AG04449 (cell line): ENCODE measurements at regions of chr11 and their contacts with region 1.

Region 1: DNA sequence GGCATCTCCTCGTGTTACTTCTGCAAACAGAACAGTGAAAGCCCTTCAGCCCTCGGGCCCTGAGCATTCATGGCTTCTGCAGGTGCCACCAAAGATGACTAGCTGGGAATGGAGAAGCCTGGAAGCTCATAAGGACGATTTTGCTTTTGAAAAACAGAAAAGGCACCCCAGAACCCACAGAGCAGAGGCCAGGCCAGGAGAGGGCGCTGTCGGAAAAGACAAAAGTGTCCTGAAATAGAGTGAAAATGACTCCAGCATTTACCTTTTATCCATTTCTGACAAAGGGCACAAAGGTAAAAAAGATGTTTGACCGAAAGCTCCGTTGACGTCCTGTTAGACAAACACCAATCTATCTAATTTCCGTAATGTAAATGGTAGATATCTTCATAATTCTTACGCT is 37.6 kb downstream of the ZNF195 start:
- DNase-seq: no peak
- H3K4me3 ChIP-seq: no peak overlapping the region
- CTCF ChIP-seq: peak; percentile 21

Region 2: GRCh38 chr11:2314525-2315394 is 1026.5 kb before region 1 on chr11:
- CTCF ChIA-PET with region 1: no interaction called
- POLR2A ChIA-PET with region 1: no interaction called
- DNase-seq: no peak
- H3K4me3 ChIP-seq: no peak overlapping the region
- CTCF ChIP-seq: no peak

Region 3: GRCh38 chr11:3353066-3353465 is 11.8 kb after region 1 on chr11:
- CTCF ChIA-PET with region 1: interaction called, 14 read pairs
- POLR2A ChIA-PET with region 1: no interaction called
- DNase-seq: no peak
- H3K4me3 ChIP-seq: no peak overlapping the region
- CTCF ChIP-seq: no peak

Region 4: GRCh38 chr11:3412837-3413236 is 71.5 kb after region 1 on chr11:
- CTCF ChIA-PET with region 1: interaction called, 21 read pairs
- POLR2A ChIA-PET with region 1: no interaction called
- DNase-seq: no peak
- H3K4me3 ChIP-seq: no peak overlapping the region
- CTCF ChIP-seq: no peak